ENCODE measurements at regions of chr2 and their contacts with region 1.

Region 1: GRCh38 chr2:171433763-171434670 is at the starts of genes DCAF17 and METTL8:
- DNase-seq: peak in 1 of 2 donors; percentile 95
- H3K4me3 ChIP-seq: peak within 1 kb of the TSS; percentile 74 to 76
- H3K27ac ChIP-seq: peak within 1 kb of the TSS; percentile 93
- H3K4me1 ChIP-seq: peaks cover 42% of the 10 kb centered on the region
- H3K27me3 ChIP-seq: no peaks in the 10 kb centered on the region
- CTCF ChIP-seq: peak in 1 of 3 experiments; percentile 17
- POLR2A ChIP-seq: peak in 1 of 2 donors; percentile 46
- total RNA-seq, gene DCAF17: 19.6 TPM
- total RNA-seq, gene METTL8: 27.7 TPM

Region 2: GRCh38 chr2:170873035-170873692 is 560.9 kb before region 1 on chr2:
- intact Hi-C with region 1: no loop called
- DNase-seq: no peak
- H3K4me3 ChIP-seq: no peak overlapping the region
- H3K27ac ChIP-seq: no peak overlapping the region
- H3K4me1 ChIP-seq: no peaks in the 10 kb centered on the region
- H3K27me3 ChIP-seq: no peaks in the 10 kb centered on the region
- CTCF ChIP-seq: peak; percentile 48 to 87 (median 55)
- POLR2A ChIP-seq: no peak

Region 3: DNA sequence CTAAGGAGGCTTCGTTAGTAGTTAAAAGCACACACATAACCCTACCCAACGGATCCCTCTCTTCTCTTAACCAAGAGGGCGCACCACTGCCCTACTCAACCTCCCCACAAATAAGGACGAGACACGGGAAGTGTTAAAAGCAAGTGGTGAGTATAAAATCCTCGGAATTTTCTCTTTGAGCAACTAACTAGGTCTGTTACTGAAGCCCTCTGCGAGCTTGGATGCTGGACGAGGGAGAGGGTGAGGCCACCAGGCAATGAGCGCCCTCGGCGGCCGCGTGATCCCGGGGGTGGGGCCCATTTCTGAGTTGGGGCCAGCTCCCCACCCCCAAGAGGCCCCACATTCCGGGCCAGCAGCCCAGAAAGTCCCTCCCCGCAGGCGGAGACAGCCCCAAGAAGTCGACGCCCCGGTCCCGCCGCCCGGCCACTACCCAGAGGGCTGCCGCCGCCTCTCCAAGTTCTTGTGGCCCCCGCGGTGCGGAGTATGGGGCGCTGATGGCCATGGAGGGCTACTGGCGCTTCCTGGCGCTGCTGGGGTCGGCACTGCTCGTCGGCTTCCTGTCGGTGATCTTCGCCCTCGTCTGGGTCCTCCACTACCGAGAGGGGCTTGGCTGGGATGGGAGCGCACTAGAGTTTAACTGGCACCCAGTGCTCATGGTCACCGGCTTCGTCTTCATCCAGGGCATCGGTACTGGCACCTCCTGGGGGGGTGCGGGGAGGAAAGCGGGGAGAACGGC is 88.2 kb after region 1 on chr2 and contains the start of gene CYBRD1:
- intact Hi-C with region 1: loop called (anchors 5 kb)
- DNase-seq: peak in 1 of 2 donors; percentile 92
- H3K4me3 ChIP-seq: peak within 1 kb of the TSS; percentile 56 to 71
- H3K27ac ChIP-seq: peak within 1 kb of the TSS; percentile 91
- H3K4me1 ChIP-seq: peaks cover 30% of the 10 kb centered on the region
- H3K27me3 ChIP-seq: no peaks in the 10 kb centered on the region
- CTCF ChIP-seq: no peak
- POLR2A ChIP-seq: peak; percentile 15 to 76
- total RNA-seq, gene CYBRD1: 226 TPM

Region 4: GRCh38 chr2:171687287-171688128 is 253.5 kb after region 1 on chr2 and contains the start of gene DYNC1I2:
- intact Hi-C with region 1: loop called (anchors 10 kb)
- DNase-seq: peak in 1 of 2 donors; percentile 98
- H3K4me3 ChIP-seq: peak within 1 kb of the TSS; percentile 84 to 85
- H3K27ac ChIP-seq: peak within 1 kb of the TSS; percentile 82
- H3K4me1 ChIP-seq: peaks cover 31% of the 10 kb centered on the region
- H3K27me3 ChIP-seq: no peaks in the 10 kb centered on the region
- CTCF ChIP-seq: no peak
- POLR2A ChIP-seq: no peak
- total RNA-seq, gene DYNC1I2: 92.1 TPM

Measured in vagina (tissue), 2 donors.